ENCODE measurements at regions of chr20 and their contacts with region 1.

Region 1: DNA sequence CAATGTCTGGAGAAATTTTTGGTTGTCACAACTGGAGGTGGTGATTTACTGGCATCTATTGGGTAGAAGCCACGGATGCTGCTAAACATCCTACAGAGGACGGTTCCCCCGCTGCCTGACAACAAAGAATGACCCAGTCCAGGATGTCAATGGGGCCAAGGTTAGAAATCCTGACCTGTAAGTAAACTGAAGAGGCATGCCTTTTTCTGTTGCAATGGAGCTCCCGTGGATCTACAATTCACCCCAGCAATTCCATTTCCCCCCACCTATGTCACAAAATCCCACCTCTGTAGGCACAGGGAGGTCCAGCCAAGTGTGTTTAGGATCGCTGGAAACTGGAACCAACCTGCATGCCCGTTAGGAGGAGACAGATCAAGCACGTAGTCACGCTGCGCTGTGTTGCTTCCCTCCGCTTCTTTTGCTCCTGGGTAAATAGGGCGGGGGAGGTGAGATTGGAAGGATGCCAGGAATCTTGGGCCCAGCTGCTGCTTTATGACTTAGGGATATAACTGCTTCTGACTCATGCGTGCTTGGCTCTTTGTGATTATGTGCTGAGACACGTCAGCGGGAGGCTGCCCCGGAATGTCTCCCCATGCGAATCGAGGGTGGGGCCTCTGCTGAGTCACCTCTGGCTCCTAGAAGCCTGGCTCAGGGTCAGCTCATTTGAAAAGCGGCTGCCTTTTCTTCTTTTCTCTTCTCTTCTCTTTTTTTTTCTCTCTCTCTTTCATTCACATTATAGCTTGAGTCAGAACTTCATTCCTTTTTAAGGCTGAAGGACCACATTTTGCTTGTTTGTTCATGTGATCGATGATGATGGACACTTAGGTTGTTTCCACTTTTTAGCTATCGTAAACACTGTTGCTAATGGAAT is 12.4 kb upstream of the PEDS1 start:
- DNase-seq: peak; percentile 99
- H3K4me3 ChIP-seq: peak overlapping the region; percentile 41
- H3K27ac ChIP-seq: peak overlapping the region; percentile 89
- H3K4me1 ChIP-seq: peaks cover 22% of the 10 kb centered on the region
- H3K27me3 ChIP-seq: no peaks in the 10 kb centered on the region
- CTCF ChIP-seq: 0 out of 2 replicates have a peak, but pooled peaks have one; percentile 12

Region 2: GRCh38 chr20:50120897-50121693 is 44.8 kb before region 1 on chr20:
- CTCF ChIA-PET with region 1: interaction called, 19 read pairs
- POLR2A ChIA-PET with region 1: no interaction called
- intact Hi-C with region 1: loop called (anchors 1 kb)
- DNase-seq: peak; percentile 76
- H3K4me3 ChIP-seq: no peak overlapping the region
- H3K27ac ChIP-seq: no peak overlapping the region
- H3K4me1 ChIP-seq: peaks cover 15% of the 10 kb centered on the region
- H3K27me3 ChIP-seq: no peaks in the 10 kb centered on the region
- CTCF ChIP-seq: peak; percentile 78

Region 3: GRCh38 chr20:50146214-50146613 is 19.7 kb before region 1 on chr20:
- CTCF ChIA-PET with region 1: no interaction called
- POLR2A ChIA-PET with region 1: no interaction called
- intact Hi-C with region 1: no loop called
- DNase-seq: no peak
- H3K4me3 ChIP-seq: no peak overlapping the region
- H3K27ac ChIP-seq: no peak overlapping the region
- H3K4me1 ChIP-seq: peaks cover 9% of the 10 kb centered on the region
- H3K27me3 ChIP-seq: no peaks in the 10 kb centered on the region
- CTCF ChIP-seq: no peak

Region 4: DNA sequence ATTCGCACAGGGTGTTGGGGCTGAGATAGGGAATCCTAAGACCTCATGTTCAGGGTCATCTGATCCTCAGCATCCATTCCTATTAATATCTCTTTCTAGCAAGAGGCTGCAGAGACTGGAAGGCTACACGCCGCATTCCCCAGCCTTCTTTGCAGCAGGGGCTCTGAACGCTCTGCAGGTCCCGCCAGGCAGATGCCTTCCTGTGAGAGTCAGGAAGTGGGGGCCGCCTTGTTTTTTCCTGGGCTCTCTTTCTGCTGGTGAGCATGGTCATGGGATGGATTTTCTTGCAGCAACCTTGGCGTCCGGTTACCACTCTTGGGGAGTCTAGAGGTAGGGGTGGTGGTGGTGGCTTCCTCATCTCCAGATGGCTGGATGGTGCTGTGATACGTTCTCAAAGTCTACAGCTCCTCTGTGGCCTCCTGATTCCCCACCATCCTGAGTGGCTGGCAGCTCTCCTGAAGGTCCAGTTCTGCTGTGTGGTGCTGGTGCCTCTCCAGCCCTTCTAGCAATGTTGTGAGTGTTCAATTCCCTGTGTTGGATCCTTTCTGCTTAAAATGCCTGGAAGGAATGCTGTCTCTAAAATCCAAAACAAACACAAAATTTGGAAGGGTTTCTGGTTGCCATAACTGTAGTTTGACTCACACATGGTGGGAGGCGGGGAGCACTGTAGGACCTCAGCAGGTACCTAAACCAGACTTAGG is 136.6 kb after region 1 on chr20:
- CTCF ChIA-PET with region 1: interaction called, 10 read pairs
- POLR2A ChIA-PET with region 1: no interaction called
- intact Hi-C with region 1: no loop called
- DNase-seq: no peak
- H3K4me3 ChIP-seq: no peak overlapping the region
- H3K27ac ChIP-seq: no peak overlapping the region
- H3K4me1 ChIP-seq: peaks cover 16% of the 10 kb centered on the region
- H3K27me3 ChIP-seq: no peaks in the 10 kb centered on the region
- CTCF ChIP-seq: no peak

Region 5: GRCh38 chr20:50346372-50347283 is 180.7 kb after region 1 on chr20:
- CTCF ChIA-PET with region 1: no interaction called
- POLR2A ChIA-PET with region 1: no interaction called
- intact Hi-C with region 1: no loop called
- DNase-seq: peak; percentile 92
- H3K4me3 ChIP-seq: no peak overlapping the region
- H3K27ac ChIP-seq: peak overlapping the region; percentile 53
- H3K4me1 ChIP-seq: peaks cover 24% of the 10 kb centered on the region
- H3K27me3 ChIP-seq: no peaks in the 10 kb centered on the region
- CTCF ChIP-seq: no peak

Measured in A673 (cell line).